Right cardiac atrium (tissue), 5 donors: ENCODE measurements at regions of chr10 and their contacts with region 1.

Region 1: GRCh38 chr10:102729029-102730026 is 14.4 kb upstream of the WBP1L start:
- DNase-seq: peak; percentile 89 to 95 (median 95)
- ATAC-seq: peak; percentile 92 to 95
- H3K4me3 ChIP-seq: no peak overlapping the region
- H3K27ac ChIP-seq: no peak overlapping the region
- H3K4me1 ChIP-seq: no peaks in the 10 kb centered on the region
- H3K27me3 ChIP-seq: no peaks in the 10 kb centered on the region

Region 2: DNA sequence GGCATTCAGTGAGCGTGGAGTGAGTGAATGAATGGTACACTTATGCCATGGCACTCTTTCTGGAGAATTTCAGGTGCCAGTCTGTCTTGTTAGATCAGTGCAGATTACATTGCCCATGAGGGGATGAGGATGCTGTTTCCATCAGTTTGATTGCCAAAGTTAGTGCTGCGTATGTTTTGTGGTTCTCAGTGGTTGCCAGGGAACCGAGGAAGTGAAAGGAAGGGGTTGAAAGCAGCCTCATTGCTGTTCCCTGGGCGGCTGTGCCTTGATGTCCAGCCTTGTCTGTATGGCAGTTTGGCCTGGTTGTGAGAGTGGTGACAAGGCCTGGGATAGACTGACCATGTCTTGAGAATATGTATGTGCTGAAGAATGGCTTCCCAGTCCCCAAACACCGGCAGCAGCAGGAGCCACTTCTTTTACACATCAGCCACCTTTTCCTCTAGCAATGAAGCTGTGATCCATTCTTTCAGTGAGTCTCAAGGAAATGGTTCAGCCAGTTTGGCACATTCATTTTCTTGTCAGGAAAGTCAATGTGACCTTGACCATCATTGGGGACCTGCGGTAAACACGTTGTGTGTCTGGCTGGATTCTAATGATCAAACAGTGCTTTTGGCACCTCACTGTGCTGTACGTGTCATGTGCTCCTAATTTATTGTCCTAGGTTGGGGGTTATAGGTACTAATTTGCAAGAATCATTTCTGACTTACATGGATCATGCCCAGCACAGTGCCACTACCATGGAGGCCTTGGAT is 44.8 kb after region 1 on chr10:
- intact Hi-C with region 1: no loop called
- DNase-seq: peak in 2 of 3 donors; percentile 72 to 81
- ATAC-seq: peak; percentile 1 to 6
- H3K4me3 ChIP-seq: no peak overlapping the region
- H3K27ac ChIP-seq: peak overlapping the region; percentile 26
- H3K4me1 ChIP-seq: peaks cover 33% of the 10 kb centered on the region
- H3K27me3 ChIP-seq: no peaks in the 10 kb centered on the region

Region 3: DNA sequence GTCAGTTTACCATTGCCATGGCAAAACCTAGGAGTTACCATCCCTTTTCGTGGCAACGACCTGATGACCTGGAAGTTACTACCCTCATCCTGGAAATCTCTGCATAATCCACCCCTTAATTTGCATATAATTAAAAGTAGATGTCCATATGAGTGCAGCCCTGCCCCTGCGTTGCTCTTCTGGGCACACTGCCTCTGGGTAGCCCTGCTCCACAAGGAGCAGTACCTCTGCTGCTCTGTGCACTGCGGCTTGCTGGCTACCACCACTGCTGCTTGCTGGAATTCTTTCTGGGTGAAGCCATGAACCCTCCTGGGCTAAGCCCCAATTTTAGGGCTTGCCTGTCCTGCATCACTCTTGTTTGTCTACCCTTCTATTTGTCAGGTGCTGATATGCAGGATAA is 95.3 kb after region 1 on chr10:
- intact Hi-C with region 1: loop called in 1 of 4 experiments (anchors 5 kb)
- DNase-seq: no peak
- ATAC-seq: no peak
- H3K4me3 ChIP-seq: no peak overlapping the region
- H3K27ac ChIP-seq: no peak overlapping the region
- H3K4me1 ChIP-seq: no peaks in the 10 kb centered on the region
- H3K27me3 ChIP-seq: no peaks in the 10 kb centered on the region

Region 4: DNA sequence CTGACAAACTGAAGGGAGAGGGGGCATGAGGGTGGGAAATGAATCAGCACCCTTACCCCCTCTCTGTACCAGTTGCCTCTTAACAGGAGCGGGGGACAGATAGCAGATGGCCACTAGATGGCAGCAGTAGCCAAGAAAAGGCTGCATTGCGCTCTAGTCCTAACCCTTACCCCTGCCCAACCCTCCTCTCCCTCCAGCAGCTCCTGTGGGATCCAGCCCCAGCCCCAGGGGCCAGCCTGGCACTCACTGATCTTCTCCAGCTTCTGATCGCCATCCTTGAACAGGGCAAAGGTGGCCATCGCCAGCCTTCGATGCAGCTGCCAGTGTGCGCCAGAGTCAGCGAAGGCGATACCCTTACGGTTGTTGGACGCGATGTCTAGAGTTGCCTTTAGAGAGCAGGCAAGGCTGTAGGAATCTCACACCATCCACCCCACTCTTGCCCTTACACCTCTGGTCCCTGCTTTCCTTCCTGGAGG is 105.7 kb after region 1 on chr10:
- intact Hi-C with region 1: loop called in 1 of 4 experiments (anchors 5 kb)
- DNase-seq: peak; percentile 75 to 85 (median 83)
- ATAC-seq: peak; percentile 91 to 92
- H3K4me3 ChIP-seq: no peak overlapping the region
- H3K27ac ChIP-seq: no peak overlapping the region
- H3K4me1 ChIP-seq: no peaks in the 10 kb centered on the region
- H3K27me3 ChIP-seq: no peaks in the 10 kb centered on the region

Region 5: GRCh38 chr10:102904346-102904745 is 175.0 kb after region 1 on chr10:
- intact Hi-C with region 1: loop called (anchors 2 to 5 kb)
- DNase-seq: no peak
- ATAC-seq: no peak
- H3K4me3 ChIP-seq: no peak overlapping the region
- H3K27ac ChIP-seq: no peak overlapping the region
- H3K4me1 ChIP-seq: no peaks in the 10 kb centered on the region
- H3K27me3 ChIP-seq: no peaks in the 10 kb centered on the region

Region 6: GRCh38 chr10:103069453-103070331 is 340.4 kb after region 1 on chr10:
- intact Hi-C with region 1: loop called in 1 of 4 experiments (anchors 10 kb)
- DNase-seq: peak; percentile 34 to 75 (median 70)
- ATAC-seq: peak; percentile 68 to 76
- H3K4me3 ChIP-seq: no peak overlapping the region
- H3K27ac ChIP-seq: no peak overlapping the region
- H3K4me1 ChIP-seq: no peaks in the 10 kb centered on the region
- H3K27me3 ChIP-seq: no peaks in the 10 kb centered on the region